ENCODE measurements at regions of chr5 and their contacts with region 1.

Region 1: DNA sequence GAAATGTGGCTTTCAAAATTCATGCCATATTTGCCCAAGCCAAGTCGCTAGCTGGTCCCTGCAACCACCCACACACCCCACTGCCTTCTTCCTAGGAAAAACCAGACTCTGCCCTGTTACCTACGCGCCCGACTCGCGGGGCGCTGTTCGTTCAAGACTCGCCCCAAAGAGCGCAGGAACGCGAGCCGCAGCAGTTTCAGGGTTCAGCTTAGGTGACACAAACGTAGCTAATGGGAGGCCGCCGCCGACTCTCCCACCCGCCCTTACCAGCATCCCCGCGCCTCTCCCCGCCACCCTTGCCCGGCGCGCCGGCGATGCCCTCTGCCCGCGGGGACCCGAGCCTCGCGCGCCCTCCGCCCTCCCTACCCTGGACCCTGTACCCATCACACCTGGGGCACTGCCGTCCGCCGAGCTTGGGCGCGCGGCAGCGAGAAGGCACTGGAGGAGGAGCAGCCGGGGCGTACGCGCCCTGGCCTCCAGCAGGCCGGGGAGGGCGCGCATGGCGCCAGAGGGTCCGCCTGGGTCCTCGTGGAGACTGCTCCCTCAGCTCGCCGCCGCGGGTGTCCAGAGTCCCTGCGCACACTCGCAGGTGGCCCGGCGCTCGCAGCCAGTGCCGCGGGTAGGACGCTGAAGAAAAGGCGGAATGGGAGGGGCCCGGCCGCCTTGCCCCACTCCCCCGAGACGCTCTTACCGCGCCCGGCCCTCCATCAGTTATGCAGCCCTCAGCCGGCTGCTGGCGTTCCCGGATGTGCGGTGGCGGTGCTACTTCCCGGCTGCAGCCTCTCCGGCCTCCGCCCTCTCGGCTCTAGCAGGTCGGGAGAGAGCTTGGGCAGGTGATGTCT is at the start of gene EMB:
- DNase-seq: peak; percentile 86
- ATAC-seq: peak; percentile 74
- H3K4me3 Mint-ChIP-seq: peak within 1 kb of the TSS; percentile 86
- H3K27ac Mint-ChIP-seq: peak within 1 kb of the TSS; percentile 96
- H3K4me1 Mint-ChIP-seq: peaks cover 70% of the 10 kb centered on the region
- H3K27me3 Mint-ChIP-seq: no peaks in the 10 kb centered on the region
- total RNA-seq, gene EMB: 139 to 149 TPM

Region 2: DNA sequence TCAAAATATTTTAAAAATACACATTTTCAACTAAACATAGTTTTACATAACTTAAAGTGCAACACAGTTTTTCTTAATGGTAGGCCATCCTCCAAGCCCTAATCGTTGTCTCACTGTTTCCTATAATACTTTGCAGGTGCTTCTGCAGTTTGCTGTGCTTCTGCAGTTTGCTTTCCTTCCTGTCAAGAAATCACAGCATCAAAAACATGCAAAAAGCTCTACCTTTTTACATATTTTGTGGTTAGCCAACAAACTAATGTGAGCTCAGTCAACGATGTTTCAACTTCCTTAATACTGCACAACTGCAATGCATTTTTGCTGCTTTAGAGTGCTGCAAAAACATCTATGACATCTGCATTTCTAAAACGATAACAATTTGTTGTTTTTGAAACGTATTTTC is 25.0 kb before region 1 on chr5:
- CTCF ChIA-PET with region 1: no interaction called
- POLR2A ChIA-PET with region 1: no interaction called
- DNase-seq: peak; percentile 41
- ATAC-seq: peak; percentile 71
- H3K4me3 Mint-ChIP-seq: peak overlapping the region; percentile 20
- H3K27ac Mint-ChIP-seq: no peak overlapping the region
- H3K4me1 Mint-ChIP-seq: peaks cover 46% of the 10 kb centered on the region
- H3K27me3 Mint-ChIP-seq: no peaks in the 10 kb centered on the region

Region 3: DNA sequence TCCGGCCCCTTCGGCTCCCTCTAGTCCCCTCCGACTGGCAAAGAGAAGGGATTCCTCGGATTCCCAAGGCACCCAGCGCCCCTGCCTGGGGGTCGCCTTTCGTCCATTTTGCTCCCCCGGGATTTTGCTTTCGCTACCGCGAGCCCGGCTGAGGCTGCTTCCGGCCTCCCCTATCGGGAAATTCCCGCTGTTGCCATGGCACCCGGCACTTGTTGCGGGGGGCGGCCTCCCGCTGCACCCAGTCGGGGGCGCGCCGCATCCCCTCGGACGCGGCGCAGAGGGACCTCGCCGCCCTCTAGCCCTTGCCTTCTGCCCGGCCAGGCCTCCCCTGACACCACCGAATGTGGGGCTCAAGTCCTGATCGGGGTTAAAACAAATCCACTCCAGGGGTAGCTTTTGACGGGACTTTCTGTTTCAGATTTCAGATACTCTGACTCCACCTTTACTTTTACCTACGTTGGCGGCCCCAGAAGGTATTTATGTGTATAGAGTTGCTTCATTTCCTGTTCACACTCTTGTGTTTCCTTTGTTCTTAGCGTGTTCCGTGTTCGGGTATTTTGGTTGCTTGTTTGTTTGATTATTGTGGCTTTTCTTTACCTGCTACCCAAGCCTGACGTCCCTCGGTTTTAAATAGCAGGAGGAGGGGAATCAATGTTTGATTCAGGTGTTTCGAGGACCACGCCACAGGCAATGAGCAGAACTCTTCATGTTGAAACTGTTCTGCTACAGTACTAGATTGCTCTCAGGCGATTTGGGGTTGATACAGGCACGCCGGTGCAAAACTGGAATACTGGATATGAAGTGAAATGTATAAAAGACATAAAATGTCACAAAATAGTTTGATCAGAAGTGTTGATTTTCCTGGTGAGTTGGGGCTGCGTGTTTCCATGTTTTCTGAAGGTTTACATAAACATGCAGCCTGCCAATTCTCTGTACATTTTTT is 227.1 kb after region 1 on chr5:
- CTCF ChIA-PET with region 1: interaction called, 11 read pairs
- POLR2A ChIA-PET with region 1: interaction called, 29 read pairs
- DNase-seq: peak; percentile 88
- ATAC-seq: peak; percentile 63
- H3K4me3 Mint-ChIP-seq: peak overlapping the region; percentile 99
- H3K27ac Mint-ChIP-seq: peak overlapping the region; percentile 100
- H3K4me1 Mint-ChIP-seq: peaks cover 61% of the 10 kb centered on the region
- H3K27me3 Mint-ChIP-seq: no peaks in the 10 kb centered on the region

Region 4: GRCh38 chr5:50733741-50734140 is 292.9 kb after region 1 on chr5:
- CTCF ChIA-PET with region 1: no interaction called
- POLR2A ChIA-PET with region 1: no interaction called
- DNase-seq: no peak
- ATAC-seq: no peak
- H3K4me3 Mint-ChIP-seq: no peak overlapping the region
- H3K27ac Mint-ChIP-seq: no peak overlapping the region
- H3K4me1 Mint-ChIP-seq: peaks cover 5% of the 10 kb centered on the region
- H3K27me3 Mint-ChIP-seq: no peaks in the 10 kb centered on the region

Region 5: DNA sequence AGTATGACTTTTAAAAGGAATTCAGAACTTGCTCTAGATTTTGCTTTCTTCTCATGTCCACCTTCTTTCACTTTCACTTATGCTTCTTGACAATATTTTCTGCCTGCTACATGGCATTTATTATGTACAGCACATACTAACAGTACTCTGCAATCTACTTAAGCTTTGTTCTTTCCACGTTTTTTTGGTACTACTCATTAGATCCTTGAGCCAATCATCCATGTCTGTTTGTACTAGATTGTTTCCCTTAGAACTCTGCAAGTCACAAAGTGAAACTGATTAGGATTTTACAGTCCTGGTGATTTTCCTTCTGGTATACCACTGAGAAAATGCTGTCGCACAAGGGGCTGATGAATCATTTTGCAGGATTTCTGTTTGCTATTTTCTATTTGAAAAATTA is 303.9 kb after region 1 on chr5:
- CTCF ChIA-PET with region 1: interaction called, 5 read pairs
- POLR2A ChIA-PET with region 1: interaction called, 12 read pairs
- DNase-seq: no peak
- ATAC-seq: peak; percentile 68
- H3K4me3 Mint-ChIP-seq: peak overlapping the region; percentile 78
- H3K27ac Mint-ChIP-seq: peak overlapping the region; percentile 85
- H3K4me1 Mint-ChIP-seq: peaks cover 62% of the 10 kb centered on the region
- H3K27me3 Mint-ChIP-seq: no peaks in the 10 kb centered on the region

Region 6: GRCh38 chr5:51095486-51095885 is 654.6 kb after region 1 on chr5:
- CTCF ChIA-PET with region 1: no interaction called
- POLR2A ChIA-PET with region 1: no interaction called
- DNase-seq: no peak
- ATAC-seq: no peak
- H3K4me3 Mint-ChIP-seq: no peak overlapping the region
- H3K27ac Mint-ChIP-seq: no peak overlapping the region
- H3K4me1 Mint-ChIP-seq: no peaks in the 10 kb centered on the region
- H3K27me3 Mint-ChIP-seq: no peaks in the 10 kb centered on the region